ENCODE measurements at regions of chr2 and their contacts with region 1.

Region 1: DNA sequence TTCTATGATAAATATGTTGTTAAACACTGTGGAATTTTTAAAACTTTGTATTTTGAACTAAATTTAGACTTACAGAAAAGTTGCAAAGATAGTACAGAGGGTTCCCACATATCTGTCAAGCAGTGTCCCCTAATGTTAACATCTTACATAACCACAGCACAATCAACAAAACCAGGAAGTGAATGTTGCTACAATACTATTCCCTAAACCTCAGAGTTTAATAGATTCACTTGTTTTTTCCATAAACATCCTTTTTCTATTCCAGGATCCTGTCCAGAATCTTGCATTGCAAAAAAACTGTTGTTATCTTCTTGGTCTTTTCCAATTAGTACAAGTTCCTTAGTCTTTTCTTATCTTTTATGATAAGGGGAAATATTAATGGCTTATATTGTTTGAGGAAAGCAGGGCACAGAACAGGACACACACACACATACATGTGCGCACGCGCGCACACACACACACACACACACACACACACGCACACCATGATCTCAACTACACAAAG is 251.1 kb upstream of the TRIB2 start:
- DNase-seq: no peak
- H3K4me3 Mint-ChIP-seq: no peak overlapping the region
- H3K27ac Mint-ChIP-seq: no peak overlapping the region
- H3K4me1 Mint-ChIP-seq: peaks cover 10% of the 10 kb centered on the region
- H3K27me3 Mint-ChIP-seq: no peaks in the 10 kb centered on the region

Region 2: GRCh38 chr2:12484536-12485115 is 18.9 kb after region 1 on chr2:
- CTCF ChIA-PET with region 1: no interaction called
- intact Hi-C with region 1: loop called (anchors 1 kb)
- DNase-seq: no peak
- H3K4me3 Mint-ChIP-seq: no peak overlapping the region
- H3K27ac Mint-ChIP-seq: no peak overlapping the region
- H3K4me1 Mint-ChIP-seq: peaks cover 51% of the 10 kb centered on the region
- H3K27me3 Mint-ChIP-seq: no peaks in the 10 kb centered on the region

Region 3: DNA sequence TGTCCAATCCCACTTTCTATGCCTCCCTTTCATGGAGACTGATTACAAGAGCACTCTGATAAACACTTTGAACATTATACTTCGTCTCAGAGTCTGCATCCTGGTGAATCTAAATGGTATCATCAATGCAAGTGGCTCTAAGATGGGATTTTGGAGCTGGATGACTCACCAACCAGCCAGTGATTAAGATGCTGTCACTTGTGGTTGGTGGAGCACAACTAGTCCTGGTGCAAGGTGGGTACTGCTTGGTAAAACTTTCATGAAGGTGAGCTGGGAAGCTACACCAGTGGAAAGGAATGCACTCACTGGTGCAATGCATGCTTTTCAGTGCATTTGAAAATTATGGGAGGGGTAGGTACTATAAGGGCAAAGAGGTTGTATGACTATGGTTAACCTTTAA is 113.3 kb after region 1 on chr2:
- CTCF ChIA-PET with region 1: no interaction called
- intact Hi-C with region 1: no loop called
- DNase-seq: peak; percentile 9
- H3K4me3 Mint-ChIP-seq: no peak overlapping the region
- H3K27ac Mint-ChIP-seq: no peak overlapping the region
- H3K4me1 Mint-ChIP-seq: no peaks in the 10 kb centered on the region
- H3K27me3 Mint-ChIP-seq: no peaks in the 10 kb centered on the region

Measured in activated naive CD4-positive, alpha-beta T cell treated with anti-CD3 and anti-CD28 coated beads for 36 hours (primary cell).